ENCODE measurements at regions of chr11 and their contacts with region 1.

Region 1: DNA sequence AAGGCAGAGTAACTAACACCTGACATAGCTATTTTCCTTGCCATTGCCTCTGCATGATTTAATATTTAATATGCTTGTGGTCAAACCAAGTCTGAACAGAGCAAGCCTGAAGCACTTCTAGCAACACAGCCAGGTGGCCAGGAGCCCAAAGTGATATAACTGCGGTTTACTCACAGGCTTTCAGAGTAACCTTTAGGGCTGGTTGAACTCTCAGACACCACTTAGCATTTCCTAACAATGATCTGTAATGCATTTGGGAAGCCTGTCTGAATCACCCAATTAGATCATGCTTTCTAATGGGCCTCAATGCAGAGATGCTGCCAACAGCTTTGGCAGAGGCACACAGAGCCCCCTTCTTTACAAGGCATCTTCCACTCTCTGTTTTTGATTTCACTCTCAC is 96.1 kb downstream of the FDX1 start:
- H3K4me3 Mint-ChIP-seq: no peak overlapping the region
- H3K27ac Mint-ChIP-seq: no peak overlapping the region
- H3K4me1 Mint-ChIP-seq: no peaks in the 10 kb centered on the region
- H3K27me3 Mint-ChIP-seq: no peaks in the 10 kb centered on the region

Region 2: GRCh38 chr11:110463153-110463552 is 62.7 kb before region 1 on chr11:
- intact Hi-C with region 1: loop called (anchors 1 kb)
- H3K4me3 Mint-ChIP-seq: no peak overlapping the region
- H3K27ac Mint-ChIP-seq: no peak overlapping the region
- H3K4me1 Mint-ChIP-seq: peaks cover 5% of the 10 kb centered on the region
- H3K27me3 Mint-ChIP-seq: no peaks in the 10 kb centered on the region

Region 3: DNA sequence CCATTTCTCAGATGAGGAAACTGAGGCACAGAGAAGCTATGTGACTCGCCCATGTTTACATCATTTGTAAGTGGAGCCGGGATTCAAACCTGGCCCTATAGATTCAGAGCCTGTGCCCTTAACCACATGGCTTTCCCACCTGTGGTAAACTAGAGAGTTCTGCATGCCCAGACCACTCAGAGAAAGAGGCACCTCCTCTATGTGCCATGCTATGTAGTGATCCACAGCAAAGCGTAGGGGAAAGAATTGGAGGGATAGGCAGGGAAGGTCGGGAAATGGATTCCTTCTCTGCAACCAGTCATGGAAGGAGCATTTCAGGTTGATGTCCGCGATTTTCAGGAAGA is 704.2 kb after region 1 on chr11:
- intact Hi-C with region 1: loop called (anchors 10 kb)
- H3K4me3 Mint-ChIP-seq: no peak overlapping the region
- H3K27ac Mint-ChIP-seq: no peak overlapping the region
- H3K4me1 Mint-ChIP-seq: peaks cover 16% of the 10 kb centered on the region
- H3K27me3 Mint-ChIP-seq: peaks cover 14% of the 10 kb centered on the region

Measured in dendritic cell treated with granulocyte-macrophage colony-stimulating factor and Interleukin-4, amounts not matched to agents 40 ng/mL and 50 ng/mL, for 4 days (primary cell).